PC-9 (cell line): ENCODE measurements at regions of chr17 and their contacts with region 1.

Region 1: DNA sequence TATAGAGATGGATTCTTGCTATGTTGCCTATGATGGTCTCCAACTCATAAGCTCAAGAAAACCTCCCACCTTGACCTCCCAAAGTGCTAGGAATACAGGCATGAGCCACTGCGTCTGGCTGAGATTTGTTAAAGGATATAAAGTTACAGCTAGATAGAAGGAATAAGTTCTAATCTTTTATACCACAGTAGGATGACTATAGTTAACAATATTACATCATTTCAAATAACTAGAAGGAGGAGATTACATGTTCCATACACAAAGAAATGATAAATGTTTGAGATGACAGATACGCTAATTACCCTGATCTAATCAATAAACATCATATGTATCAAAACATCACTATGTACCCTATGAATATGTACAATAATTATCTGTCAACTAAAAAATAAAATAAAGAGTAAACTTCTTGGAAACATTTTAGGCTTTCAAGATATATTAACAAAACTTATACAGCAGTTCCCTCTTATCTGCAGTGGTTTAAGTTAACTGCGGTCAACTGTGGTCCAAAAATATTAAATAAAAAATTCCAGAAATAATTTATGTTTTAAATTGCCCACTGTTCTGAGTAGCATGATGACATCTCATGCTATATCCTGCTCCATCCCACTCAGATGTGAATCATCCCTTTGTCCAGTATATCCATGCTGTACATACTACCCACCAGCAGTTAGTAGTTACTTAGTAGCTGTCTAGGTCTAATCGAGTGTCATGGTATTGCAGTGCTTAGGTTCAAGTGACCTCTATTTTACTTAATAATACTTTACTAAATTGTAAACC is 129.2 kb upstream of the NACA2 start:
- DNase-seq: no peak
- H3K4me3 ChIP-seq: no peak overlapping the region
- H3K27ac ChIP-seq: no peak overlapping the region
- H3K4me1 ChIP-seq: no peaks in the 10 kb centered on the region
- H3K27me3 ChIP-seq: no peaks in the 10 kb centered on the region
- CTCF ChIP-seq: no peak

Region 2: GRCh38 chr17:61678339-61678738 is 41.9 kb before region 1 on chr17:
- CTCF ChIA-PET with region 1: no interaction called
- POLR2A ChIA-PET with region 1: no interaction called
- intact Hi-C with region 1: loop called (anchors 1 kb)
- DNase-seq: no peak
- H3K4me3 ChIP-seq: no peak overlapping the region
- H3K27ac ChIP-seq: no peak overlapping the region
- H3K4me1 ChIP-seq: no peaks in the 10 kb centered on the region
- H3K27me3 ChIP-seq: no peaks in the 10 kb centered on the region
- CTCF ChIP-seq: no peak

Region 3: DNA sequence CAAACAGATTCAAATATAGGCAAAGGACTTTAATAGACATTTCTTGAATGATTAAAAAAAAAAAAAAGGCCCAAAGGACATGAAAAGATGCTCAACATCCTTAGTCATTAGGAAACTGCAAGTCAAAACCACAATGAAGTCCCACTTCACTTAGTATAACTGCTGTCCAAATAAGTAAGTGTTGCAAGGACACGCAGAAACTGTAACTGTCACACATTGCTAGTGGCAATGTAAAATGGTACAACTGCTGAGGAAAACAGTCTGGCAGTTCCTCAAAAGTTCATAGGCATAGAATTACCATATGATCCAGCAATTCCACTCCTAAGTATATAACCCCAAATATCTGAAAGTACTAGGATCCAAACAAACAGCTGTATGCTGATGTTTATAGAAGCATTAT is 30.4 kb after region 1 on chr17:
- CTCF ChIA-PET with region 1: no interaction called
- POLR2A ChIA-PET with region 1: interaction called, 12 read pairs
- intact Hi-C with region 1: no loop called
- DNase-seq: no peak
- H3K4me3 ChIP-seq: no peak overlapping the region
- H3K27ac ChIP-seq: no peak overlapping the region
- H3K4me1 ChIP-seq: no peaks in the 10 kb centered on the region
- H3K27me3 ChIP-seq: no peaks in the 10 kb centered on the region
- CTCF ChIP-seq: no peak

Region 4: DNA sequence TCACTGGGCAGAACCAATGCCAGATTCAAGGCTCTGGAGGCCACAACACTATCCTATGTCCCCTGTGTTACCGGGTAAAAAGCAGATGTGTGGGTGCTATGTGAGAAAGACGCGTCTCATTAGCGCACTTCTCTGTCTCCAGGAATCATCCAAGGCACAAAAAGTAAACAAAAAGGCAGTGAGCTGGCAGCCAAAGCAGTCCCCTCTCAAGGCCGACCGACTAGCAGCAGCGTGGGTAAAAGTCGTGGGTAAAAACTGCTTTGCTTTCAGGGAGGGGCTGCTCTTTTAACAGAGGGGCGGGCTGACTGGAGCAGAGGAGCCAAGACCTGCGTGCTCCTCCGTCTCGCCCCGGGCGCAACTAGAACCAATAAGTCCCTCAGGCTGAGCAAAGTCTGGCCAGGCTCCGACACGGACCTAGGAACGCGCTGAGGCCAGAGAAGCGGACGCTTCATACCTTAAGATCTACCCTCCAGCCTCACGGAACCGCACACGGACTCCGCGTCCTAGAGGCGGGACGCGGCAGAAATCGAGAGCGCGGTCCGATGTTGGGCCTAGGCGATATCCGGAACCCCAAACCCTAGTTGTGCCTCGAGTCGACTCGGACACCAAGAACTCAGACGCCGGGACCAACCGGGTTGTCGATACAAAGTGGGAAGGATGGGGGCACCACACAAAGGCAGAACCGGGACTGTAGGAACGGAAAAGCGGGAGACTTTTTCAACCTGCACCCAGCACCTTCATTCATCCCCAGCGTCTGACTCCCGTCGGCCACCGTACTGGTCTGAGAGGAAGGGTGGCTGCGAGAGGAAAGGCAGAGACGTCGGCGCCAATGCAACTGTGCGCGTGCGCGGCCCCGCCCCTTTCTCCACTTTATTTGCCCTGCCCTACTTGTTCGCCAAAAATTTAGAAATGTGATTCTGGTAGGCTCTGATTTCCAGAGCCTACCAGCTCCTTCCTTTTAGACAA is 207.3 kb after region 1 on chr17 and contains the start of gene INTS2:
- CTCF ChIA-PET with region 1: no interaction called
- POLR2A ChIA-PET with region 1: no interaction called
- intact Hi-C with region 1: no loop called
- DNase-seq: peak; percentile 74 to 91
- H3K4me3 ChIP-seq: peak within 1 kb of the TSS; percentile 94
- H3K27ac ChIP-seq: peak within 1 kb of the TSS; percentile 62
- H3K4me1 ChIP-seq: peaks cover 11% of the 10 kb centered on the region; the same call in 1 of the 2 replicates
- H3K27me3 ChIP-seq: no peaks in the 10 kb centered on the region
- CTCF ChIP-seq: no peak
- total RNA-seq, gene INTS2: 15.7 and 17.5 TPM in 2 replicates